HepG2 (cell line): ENCODE measurements at regions of chr14 and their contacts with region 1.

Region 1: DNA sequence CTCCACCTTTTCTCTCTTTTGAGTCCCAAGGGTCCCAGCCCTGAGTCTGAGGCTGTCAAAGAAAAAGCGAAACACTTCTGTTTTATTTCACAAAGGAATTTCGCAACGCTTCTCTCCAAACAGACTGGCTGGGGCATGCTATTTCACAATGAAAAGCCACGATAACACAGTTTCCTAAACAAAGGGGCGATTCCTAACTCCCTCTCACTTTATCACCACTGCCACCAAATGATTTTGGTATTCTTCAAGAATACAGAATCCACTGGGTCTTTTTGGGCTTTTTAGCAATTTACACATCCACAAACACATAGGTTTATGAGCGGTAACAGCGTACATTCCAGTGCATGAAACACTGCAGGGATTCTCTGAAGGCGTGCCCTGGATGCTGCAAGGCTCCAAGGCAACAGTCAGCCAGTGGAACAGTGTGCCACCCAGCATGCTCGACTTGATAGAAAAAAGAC is 161.2 kb downstream of the DAD1 start:
- DNase-seq: peak; percentile 81
- ATAC-seq: peak; percentile 88
- H3K4me3 ChIP-seq: no peak overlapping the region
- H3K27ac ChIP-seq: no peak overlapping the region
- H3K4me1 ChIP-seq: peaks cover 23% of the 10 kb centered on the region
- H3K27me3 ChIP-seq: peaks cover 0 to 2% of the 10 kb centered on the region in 2 experiments; a peak in 1 of 5 replicates
- CTCF ChIP-seq: no peak
- EP300 ChIP-seq: peak; percentile 57 to 87; a peak in 3 of 4 replicates
- POLR2A ChIP-seq: no peak
- RAD21 ChIP-seq: no peak

Region 2: GRCh38 chr14:22319526-22320361 is 108.1 kb before region 1 on chr14:
- CTCF ChIA-PET with region 1: no interaction called
- POLR2A ChIA-PET with region 1: no interaction called
- in situ Hi-C with region 1: no loop called
- intact Hi-C with region 1: loop called (anchors 5 kb)
- DNase-seq: peak; percentile 80
- ATAC-seq: peak; percentile 98
- H3K4me3 ChIP-seq: no peak overlapping the region
- H3K27ac ChIP-seq: no peak overlapping the region
- H3K4me1 ChIP-seq: no peaks in the 10 kb centered on the region
- H3K27me3 ChIP-seq: 0 out of 5 replicates have a peak, but pooled peaks cover 0 to 5% of the 10 kb centered on the region in 2 experiments
- CTCF ChIP-seq: peak; percentile 93
- EP300 ChIP-seq: no peak
- POLR2A ChIP-seq: no peak
- RAD21 ChIP-seq: peak; percentile 70